ENCODE measurements at regions of chr19 and their contacts with region 1.

Region 1: GRCh38 chr19:50889638-50890037 is 16.4 kb downstream of the KLK2 start:
- DNase-seq: no peak
- H3K4me3 ChIP-seq: no peak overlapping the region
- H3K27ac ChIP-seq: no peak overlapping the region
- H3K4me1 ChIP-seq: no peaks in the 10 kb centered on the region
- H3K27me3 ChIP-seq: no peaks in the 10 kb centered on the region
- CTCF ChIP-seq: no peak
- POLR2A ChIP-seq: no peak

Region 2: GRCh38 chr19:50349277-50350057 is 540.2 kb before region 1 on chr19:
- intact Hi-C with region 1: loop called (anchors 5 kb)
- DNase-seq: no peak
- H3K4me3 ChIP-seq: no peak overlapping the region
- H3K27ac ChIP-seq: no peak overlapping the region
- H3K4me1 ChIP-seq: no peaks in the 10 kb centered on the region
- H3K27me3 ChIP-seq: no peaks in the 10 kb centered on the region
- CTCF ChIP-seq: no peak
- POLR2A ChIP-seq: no peak

Region 3: DNA sequence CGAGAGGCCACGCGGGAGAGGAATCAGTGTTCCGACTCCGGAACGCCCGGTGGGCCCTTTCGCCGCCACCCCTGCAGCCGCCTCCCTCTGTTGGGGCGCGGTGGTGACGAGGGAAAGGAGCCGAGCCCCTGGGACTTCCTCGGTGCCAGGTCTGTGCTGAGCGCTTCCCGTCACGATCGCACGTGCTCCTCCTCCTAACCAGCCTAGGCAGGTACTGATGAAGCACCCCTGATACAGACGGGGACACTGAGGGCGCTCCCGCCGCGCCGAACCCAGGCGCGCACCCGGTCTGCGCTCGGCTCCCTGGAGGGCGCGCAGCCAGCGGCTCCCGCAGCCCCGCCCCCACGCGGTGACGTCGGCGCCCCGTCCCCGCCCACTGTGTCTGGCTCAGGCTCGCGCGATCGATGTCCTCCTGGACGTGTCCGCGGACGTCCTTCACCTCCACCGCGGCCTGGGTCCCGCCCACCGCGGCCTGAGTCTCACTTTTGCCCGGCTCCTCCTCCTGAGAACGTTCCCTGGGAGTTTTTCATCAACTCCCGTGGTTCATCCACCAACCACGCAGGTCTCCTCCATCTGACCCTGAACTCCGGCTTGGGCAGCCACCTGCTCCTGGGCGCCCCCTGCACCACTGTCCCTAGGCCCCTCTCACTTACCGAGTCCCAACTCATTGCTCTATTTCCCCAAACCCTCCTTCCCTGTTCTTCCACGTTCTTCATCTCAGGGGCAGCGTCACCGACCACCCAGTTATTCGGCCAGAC is 53.7 kb before region 1 on chr19:
- intact Hi-C with region 1: no loop called
- DNase-seq: no peak
- H3K4me3 ChIP-seq: peak overlapping the region; percentile 36 to 52
- H3K27ac ChIP-seq: no peak overlapping the region
- H3K4me1 ChIP-seq: peaks cover 16% of the 10 kb centered on the region
- H3K27me3 ChIP-seq: no peaks in the 10 kb centered on the region
- CTCF ChIP-seq: no peak
- POLR2A ChIP-seq: no peak

Region 4: GRCh38 chr19:50851620-50852019 is 38.0 kb before region 1 on chr19:
- intact Hi-C with region 1: no loop called
- DNase-seq: no peak
- H3K4me3 ChIP-seq: no peak overlapping the region
- H3K27ac ChIP-seq: no peak overlapping the region
- H3K4me1 ChIP-seq: no peaks in the 10 kb centered on the region
- H3K27me3 ChIP-seq: no peaks in the 10 kb centered on the region
- CTCF ChIP-seq: no peak
- POLR2A ChIP-seq: no peak